ENCODE measurements at regions of chr7 and their contacts with region 1.

Region 1: GRCh38 chr7:119935418-119936025 is 337.5 kb upstream of the KCND2 start:
- DNase-seq: peak in 1 of 4 experiments; percentile 64
- ATAC-seq: peak; percentile 76
- H3K4me3 ChIP-seq: no peak overlapping the region
- H3K27ac ChIP-seq: no peak overlapping the region
- H3K4me1 ChIP-seq: peaks cover 0 to 3% of the 10 kb centered on the region in 2 experiments; a peak in 1 of 5 replicates
- H3K27me3 ChIP-seq: no peaks in the 10 kb centered on the region
- CTCF ChIP-seq: peak in 2 of 3 experiments; percentile 35 to 55; a peak in 3 of 6 replicates
- EP300 ChIP-seq: no peak
- POLR2A ChIP-seq: no peak
- RAD21 ChIP-seq: peak; percentile 38 to 68

Region 2: GRCh38 chr7:119842337-119842736 is 93.2 kb before region 1 on chr7:
- CTCF ChIA-PET with region 1: no interaction called
- POLR2A ChIA-PET with region 1: no interaction called
- in situ Hi-C with region 1: no loop called
- intact Hi-C with region 1: no loop called
- DNase-seq: no peak
- ATAC-seq: no peak
- H3K4me3 ChIP-seq: no peak overlapping the region
- H3K27ac ChIP-seq: no peak overlapping the region
- H3K4me1 ChIP-seq: no peaks in the 10 kb centered on the region; a peak in 2 of 5 replicates
- H3K27me3 ChIP-seq: no peaks in the 10 kb centered on the region
- CTCF ChIP-seq: no peak
- EP300 ChIP-seq: no peak
- POLR2A ChIP-seq: no peak
- RAD21 ChIP-seq: no peak

Region 3: GRCh38 chr7:119908948-119909347 is 26.6 kb before region 1 on chr7:
- CTCF ChIA-PET with region 1: no interaction called
- POLR2A ChIA-PET with region 1: interaction called, 11 read pairs
- in situ Hi-C with region 1: no loop called
- intact Hi-C with region 1: no loop called
- DNase-seq: peak in 1 of 4 experiments; percentile 42
- ATAC-seq: no peak
- H3K4me3 ChIP-seq: no peak overlapping the region
- H3K27ac ChIP-seq: no peak overlapping the region
- H3K4me1 ChIP-seq: peaks cover 0 to 6% of the 10 kb centered on the region in 2 experiments; a peak in 2 of 5 replicates
- H3K27me3 ChIP-seq: no peaks in the 10 kb centered on the region
- CTCF ChIP-seq: no peak
- EP300 ChIP-seq: no peak
- POLR2A ChIP-seq: no peak
- RAD21 ChIP-seq: no peak

Region 4: DNA sequence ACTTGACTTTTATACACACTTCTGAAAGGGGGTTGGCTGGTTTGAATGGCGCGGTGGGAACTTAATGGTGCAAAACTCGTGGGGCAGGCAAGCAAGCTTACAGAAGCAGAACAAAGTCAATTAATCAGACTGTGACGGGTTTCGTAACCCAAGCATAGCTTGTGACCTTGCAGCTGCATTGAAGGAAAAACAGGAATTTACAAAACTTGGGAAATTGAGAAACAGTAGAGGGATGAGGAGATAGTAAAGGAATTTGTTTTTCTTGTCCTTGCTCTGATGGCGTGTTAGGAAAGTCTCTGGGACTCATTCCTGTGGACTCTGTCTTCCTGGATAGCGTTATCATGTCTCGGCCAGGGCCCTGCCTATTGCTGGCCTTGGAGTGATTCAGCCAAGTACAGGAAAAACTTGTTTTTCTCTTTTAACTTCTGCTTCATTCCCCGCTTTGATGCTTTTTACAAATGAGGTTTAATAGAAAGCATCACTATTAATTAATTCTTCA is 117.4 kb after region 1 on chr7:
- CTCF ChIA-PET with region 1: no interaction called
- POLR2A ChIA-PET with region 1: no interaction called
- in situ Hi-C with region 1: no loop called
- intact Hi-C with region 1: loop called (anchors 10 kb)
- DNase-seq: peak in 2 of 4 experiments; percentile 53 to 72
- ATAC-seq: peak; percentile 84
- H3K4me3 ChIP-seq: no peak overlapping the region
- H3K27ac ChIP-seq: peak overlapping the region; percentile 44
- H3K4me1 ChIP-seq: peaks cover 0 to 4% of the 10 kb centered on the region in 2 experiments; a peak in 2 of 5 replicates
- H3K27me3 ChIP-seq: no peaks in the 10 kb centered on the region
- CTCF ChIP-seq: no peak
- EP300 ChIP-seq: peak; percentile 32; the same call in 1 of the 2 replicates
- POLR2A ChIP-seq: no peak
- RAD21 ChIP-seq: no peak

Region 5: GRCh38 chr7:120089968-120090367 is 154.4 kb after region 1 on chr7:
- CTCF ChIA-PET with region 1: no interaction called
- POLR2A ChIA-PET with region 1: no interaction called
- in situ Hi-C with region 1: no loop called
- intact Hi-C with region 1: loop called (anchors 1 kb)
- DNase-seq: peak in 3 of 4 experiments; percentile 15 to 76 (median 51)
- ATAC-seq: peak; percentile 98
- H3K4me3 ChIP-seq: no peak overlapping the region
- H3K27ac ChIP-seq: no peak overlapping the region
- H3K4me1 ChIP-seq: no peaks in the 10 kb centered on the region
- H3K27me3 ChIP-seq: no peaks in the 10 kb centered on the region; a peak in 1 of 5 replicates
- CTCF ChIP-seq: peak; percentile 65 to 72 (median 66)
- EP300 ChIP-seq: no peak
- POLR2A ChIP-seq: no peak
- RAD21 ChIP-seq: peak; percentile 67 to 81

Region 6: GRCh38 chr7:120123528-120123927 is 188.0 kb after region 1 on chr7:
- CTCF ChIA-PET with region 1: no interaction called
- POLR2A ChIA-PET with region 1: no interaction called
- in situ Hi-C with region 1: no loop called
- intact Hi-C with region 1: no loop called
- DNase-seq: no peak
- ATAC-seq: no peak
- H3K4me3 ChIP-seq: no peak overlapping the region
- H3K27ac ChIP-seq: no peak overlapping the region
- H3K4me1 ChIP-seq: no peaks in the 10 kb centered on the region
- H3K27me3 ChIP-seq: no peaks in the 10 kb centered on the region
- CTCF ChIP-seq: no peak
- EP300 ChIP-seq: no peak
- POLR2A ChIP-seq: no peak
- RAD21 ChIP-seq: no peak